ENCODE measurements at regions of chr11 and their contacts with region 1.

Region 1: GRCh38 chr11:9460322-9461067 is at the start of gene ZNF143:
- DNase-seq: peak; percentile 100
- ATAC-seq: peak; percentile 91
- H3K4me3 Mint-ChIP-seq: peak within 1 kb of the TSS; percentile 92
- H3K27ac Mint-ChIP-seq: peak within 1 kb of the TSS; percentile 96
- H3K4me1 Mint-ChIP-seq: peaks cover 23% of the 10 kb centered on the region
- H3K27me3 Mint-ChIP-seq: no peaks in the 10 kb centered on the region
- total RNA-seq, gene ZNF143: 31.4 to 33.7 TPM

Region 2: GRCh38 chr11:9314291-9315036 is 146.0 kb before region 1 on chr11 and contains the start of gene TMEM41B:
- CTCF ChIA-PET with region 1: interaction called, 3 read pairs
- POLR2A ChIA-PET with region 1: interaction called, 14 read pairs
- DNase-seq: peak; percentile 100
- ATAC-seq: peak; percentile 97
- H3K4me3 Mint-ChIP-seq: peak within 1 kb of the TSS; percentile 97
- H3K27ac Mint-ChIP-seq: peak within 1 kb of the TSS; percentile 95
- H3K4me1 Mint-ChIP-seq: peaks cover 29% of the 10 kb centered on the region
- H3K27me3 Mint-ChIP-seq: peaks cover 19% of the 10 kb centered on the region
- total RNA-seq, gene TMEM41B: 32.7 to 32.8 TPM

Region 3: GRCh38 chr11:9363954-9364912 is 96.3 kb before region 1 on chr11:
- CTCF ChIA-PET with region 1: no interaction called
- POLR2A ChIA-PET with region 1: interaction called, 18 read pairs
- DNase-seq: peak; percentile 80
- ATAC-seq: peak; percentile 94
- H3K4me3 Mint-ChIP-seq: peak overlapping the region; percentile 75
- H3K27ac Mint-ChIP-seq: peak overlapping the region; percentile 90
- H3K4me1 Mint-ChIP-seq: peaks cover 34% of the 10 kb centered on the region
- H3K27me3 Mint-ChIP-seq: peaks cover 2% of the 10 kb centered on the region

Region 4: DNA sequence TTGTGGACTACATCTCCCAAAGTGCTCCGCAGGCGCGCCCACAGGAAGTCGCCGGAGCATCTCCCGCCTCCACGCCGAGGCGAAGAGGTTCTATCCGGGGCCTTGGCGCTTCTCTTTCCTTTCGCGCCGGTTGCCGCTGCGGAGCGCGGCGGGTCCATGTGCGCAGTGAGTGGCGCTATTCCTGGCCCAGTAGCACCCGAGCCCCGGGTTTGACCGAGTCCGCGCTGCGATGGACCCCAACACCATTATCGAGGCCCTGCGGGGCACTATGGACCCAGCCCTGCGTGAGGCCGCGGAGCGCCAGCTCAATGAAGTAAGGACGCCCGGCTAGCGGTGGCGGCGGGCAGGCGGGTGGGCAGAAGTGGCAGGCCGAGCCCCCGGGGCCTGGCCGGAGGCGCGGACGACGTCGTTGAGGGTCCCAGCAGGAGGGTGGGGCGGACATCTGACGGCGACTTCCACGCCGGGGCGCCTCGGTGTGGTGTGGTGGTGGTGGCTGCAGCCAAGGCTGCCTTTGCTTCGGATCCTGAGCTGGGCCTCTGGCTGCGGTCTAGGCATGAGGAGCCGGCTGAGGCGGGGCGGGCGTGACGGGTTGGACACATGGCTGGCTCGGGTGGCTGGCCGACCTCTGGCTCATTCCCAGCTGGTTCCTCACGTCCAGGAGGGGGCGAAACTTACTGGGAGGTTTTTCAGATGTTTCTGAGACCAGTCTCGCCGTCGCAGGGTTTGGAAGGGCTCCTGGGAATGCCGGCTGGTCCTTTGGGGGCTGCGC is 75.8 kb before region 1 on chr11 and contains the start of gene IPO7:
- CTCF ChIA-PET with region 1: interaction called, 9 read pairs
- POLR2A ChIA-PET with region 1: interaction called, 35 read pairs
- DNase-seq: peak; percentile 94
- ATAC-seq: peak; percentile 97
- H3K4me3 Mint-ChIP-seq: peak within 1 kb of the TSS; percentile 89
- H3K27ac Mint-ChIP-seq: peak within 1 kb of the TSS; percentile 90
- H3K4me1 Mint-ChIP-seq: peaks cover 31% of the 10 kb centered on the region
- H3K27me3 Mint-ChIP-seq: no peaks in the 10 kb centered on the region
- total RNA-seq, gene IPO7: 110 to 111 TPM

Region 5: DNA sequence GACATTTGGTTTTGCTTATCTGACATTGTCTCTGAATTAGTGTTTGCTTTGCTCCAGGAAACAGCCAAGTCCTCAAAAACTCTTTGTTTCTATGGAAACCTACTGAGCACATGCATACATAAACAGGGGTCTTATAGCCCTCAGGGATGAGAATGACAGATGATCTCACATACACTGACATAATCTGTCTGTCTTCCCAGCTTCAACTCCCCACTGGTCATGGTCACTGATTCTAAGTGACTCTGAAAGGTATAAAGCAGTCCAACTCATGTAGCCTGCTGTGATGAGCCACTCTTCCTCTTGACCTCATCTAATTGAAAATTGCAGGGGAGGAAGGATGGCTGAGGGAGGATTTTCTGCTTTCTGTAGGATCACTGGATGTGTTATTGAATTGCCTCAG is 12.9 kb after region 1 on chr11:
- CTCF ChIA-PET with region 1: no interaction called
- POLR2A ChIA-PET with region 1: interaction called, 13 read pairs
- DNase-seq: no peak
- ATAC-seq: no peak
- H3K4me3 Mint-ChIP-seq: no peak overlapping the region
- H3K27ac Mint-ChIP-seq: no peak overlapping the region
- H3K4me1 Mint-ChIP-seq: no peaks in the 10 kb centered on the region
- H3K27me3 Mint-ChIP-seq: no peaks in the 10 kb centered on the region

Region 6: GRCh38 chr11:9573052-9573774 is 112.7 kb after region 1 on chr11 and contains the start of gene WEE1:
- CTCF ChIA-PET with region 1: no interaction called
- POLR2A ChIA-PET with region 1: interaction called, 15 read pairs
- DNase-seq: peak; percentile 98
- ATAC-seq: peak; percentile 96
- H3K4me3 Mint-ChIP-seq: peak within 1 kb of the TSS; percentile 98
- H3K27ac Mint-ChIP-seq: peak within 1 kb of the TSS; percentile 87
- H3K4me1 Mint-ChIP-seq: peaks cover 46% of the 10 kb centered on the region
- H3K27me3 Mint-ChIP-seq: peaks cover 14% of the 10 kb centered on the region
- total RNA-seq, gene WEE1: 73.3 to 75.1 TPM